ENCODE measurements at regions of chr11 and their contacts with region 1.

Region 1: GRCh38 chr11:11841723-11842420 is at the start of gene USP47:
- DNase-seq: peak; percentile 87
- H3K4me3 ChIP-seq: peak within 1 kb of the TSS; percentile 81 to 97 (median 86)
- H3K27ac ChIP-seq: peak within 1 kb of the TSS; percentile 95
- H3K4me1 ChIP-seq: peaks cover 22% of the 10 kb centered on the region
- H3K27me3 ChIP-seq: no peaks in the 10 kb centered on the region
- CTCF ChIP-seq: peak; percentile 44 to 55
- POLR2A ChIP-seq: peak; percentile 97
- total RNA-seq, gene USP47: 38.0 and 41.5 TPM in 2 replicates

Region 2: DNA sequence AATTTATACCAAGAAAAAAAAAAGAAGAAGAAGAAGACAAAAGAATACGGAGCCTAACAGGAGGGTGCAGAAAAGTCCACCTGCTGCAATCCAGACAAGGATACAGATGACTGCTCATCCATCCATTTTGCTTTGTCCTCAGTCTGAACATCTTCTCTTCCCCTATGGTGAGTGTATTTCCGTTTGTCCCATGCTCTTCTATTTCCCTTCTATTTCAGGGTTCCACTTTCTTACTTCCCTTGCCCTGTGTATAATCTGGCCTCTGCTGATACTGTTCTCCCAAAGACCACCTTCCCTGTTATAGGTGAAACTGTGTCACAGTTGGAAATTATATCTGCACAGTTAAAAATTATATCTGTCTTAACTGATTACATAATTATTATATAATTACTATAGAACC is 48.8 kb before region 1 on chr11:
- CTCF ChIA-PET with region 1: no interaction called
- POLR2A ChIA-PET with region 1: no interaction called
- dilution Hi-C with region 1: no loop called
- intact Hi-C with region 1: no loop called
- DNase-seq: no peak
- H3K4me3 ChIP-seq: no peak overlapping the region
- H3K27ac ChIP-seq: no peak overlapping the region
- H3K4me1 ChIP-seq: no peaks in the 10 kb centered on the region
- H3K27me3 ChIP-seq: peaks cover 12 to 14% of the 10 kb centered on the region in 2 experiments
- CTCF ChIP-seq: no peak
- POLR2A ChIP-seq: no peak

Region 3: DNA sequence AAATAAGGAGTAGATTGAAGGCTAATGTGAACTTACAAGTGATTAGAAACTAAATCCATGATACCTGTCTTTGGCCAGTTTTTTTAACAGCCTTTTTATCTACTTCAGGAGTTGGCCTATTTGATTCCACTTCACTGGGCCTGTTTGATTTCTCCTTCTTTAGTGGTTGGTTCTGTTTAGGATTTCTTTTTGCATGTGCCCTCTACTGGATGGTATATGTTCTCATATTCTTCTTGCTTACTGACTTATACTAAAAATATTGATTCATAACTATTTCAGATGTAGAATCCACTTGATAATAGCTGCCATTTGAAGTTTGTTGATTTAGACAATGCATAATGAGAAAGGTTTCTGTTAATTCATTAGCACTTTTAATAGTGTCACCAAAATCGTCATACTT is 53.8 kb after region 1 on chr11:
- CTCF ChIA-PET with region 1: interaction called, 3 read pairs
- POLR2A ChIA-PET with region 1: no interaction called
- dilution Hi-C with region 1: no loop called
- intact Hi-C with region 1: loop called (anchors 2 kb)
- DNase-seq: peak; percentile 15
- H3K4me3 ChIP-seq: no peak overlapping the region
- H3K27ac ChIP-seq: no peak overlapping the region
- H3K4me1 ChIP-seq: no peaks in the 10 kb centered on the region
- H3K27me3 ChIP-seq: no peaks in the 10 kb centered on the region
- CTCF ChIP-seq: no peak
- POLR2A ChIP-seq: no peak

Region 4: DNA sequence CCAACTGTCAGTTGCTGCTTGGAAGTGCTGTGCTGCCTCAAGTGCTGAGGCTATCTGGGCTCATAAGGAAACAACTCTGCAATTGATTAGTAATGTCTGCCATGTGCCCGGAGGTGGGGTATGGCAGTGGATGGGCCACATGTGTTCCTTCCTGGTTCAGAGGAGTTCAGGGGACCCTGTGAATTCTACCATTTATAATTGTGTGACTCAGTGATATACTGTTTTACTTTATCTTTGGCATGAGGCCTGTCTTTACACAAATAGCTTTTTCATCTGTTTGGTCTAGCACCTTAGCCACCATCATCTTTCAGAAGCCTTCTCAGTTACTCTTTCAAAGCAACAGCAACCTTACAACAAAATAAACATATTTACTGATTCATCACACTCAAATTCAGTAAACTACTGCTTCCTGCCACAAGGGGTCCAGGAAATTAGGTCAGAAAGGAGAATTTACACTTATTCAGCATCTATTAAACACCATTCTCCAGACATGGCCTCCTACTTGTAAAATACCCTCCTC is 145.7 kb after region 1 on chr11:
- CTCF ChIA-PET with region 1: no interaction called
- POLR2A ChIA-PET with region 1: no interaction called
- dilution Hi-C with region 1: no loop called
- intact Hi-C with region 1: no loop called
- DNase-seq: peak; percentile 78
- H3K4me3 ChIP-seq: no peak overlapping the region
- H3K27ac ChIP-seq: peak overlapping the region; percentile 75
- H3K4me1 ChIP-seq: peaks cover 43% of the 10 kb centered on the region
- H3K27me3 ChIP-seq: no peaks in the 10 kb centered on the region
- CTCF ChIP-seq: peak in 1 of 2 donors; percentile 36
- POLR2A ChIP-seq: peak; percentile 57